Panc1 (cell line): ENCODE measurements at regions of chr5 and their contacts with region 1.

Region 1: DNA sequence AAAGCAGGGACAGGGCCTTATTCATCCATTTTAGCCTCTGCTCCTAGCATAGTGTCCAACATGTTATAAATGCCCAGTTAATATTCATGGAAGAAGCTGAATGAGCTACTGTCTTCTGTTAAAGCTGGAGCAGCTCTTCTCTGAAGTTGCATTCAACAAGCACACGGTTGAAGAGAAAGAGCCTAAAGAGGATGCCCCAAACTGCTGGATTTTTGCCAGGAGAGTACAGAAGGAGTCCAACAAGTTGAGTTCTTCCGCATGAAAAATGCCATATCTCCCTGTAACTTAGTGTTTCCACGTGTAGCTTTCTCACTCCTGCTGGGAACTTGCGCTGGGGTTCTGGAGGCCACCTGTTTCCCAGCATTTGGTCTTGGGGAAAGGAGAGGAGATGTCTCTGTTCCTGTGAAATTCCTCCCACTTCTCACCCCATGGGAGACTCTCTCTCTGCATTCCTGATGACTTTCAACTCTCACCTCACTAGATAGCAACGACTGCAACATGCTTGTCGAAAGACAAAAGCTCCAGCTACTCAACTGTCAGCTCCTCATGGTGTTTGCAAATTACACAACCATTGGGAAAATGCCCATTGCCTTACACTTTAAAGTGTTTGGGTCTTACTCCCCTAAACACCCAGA is 122.8 kb downstream of the KIF4B start:
- DNase-seq: no peak
- ATAC-seq: no peak
- H3K4me3 ChIP-seq: no peak overlapping the region
- H3K27ac ChIP-seq: no peak overlapping the region
- H3K4me1 ChIP-seq: no peaks in the 10 kb centered on the region
- H3K27me3 ChIP-seq: peaks cover 5% of the 10 kb centered on the region
- CTCF ChIP-seq: no peak

Region 2: DNA sequence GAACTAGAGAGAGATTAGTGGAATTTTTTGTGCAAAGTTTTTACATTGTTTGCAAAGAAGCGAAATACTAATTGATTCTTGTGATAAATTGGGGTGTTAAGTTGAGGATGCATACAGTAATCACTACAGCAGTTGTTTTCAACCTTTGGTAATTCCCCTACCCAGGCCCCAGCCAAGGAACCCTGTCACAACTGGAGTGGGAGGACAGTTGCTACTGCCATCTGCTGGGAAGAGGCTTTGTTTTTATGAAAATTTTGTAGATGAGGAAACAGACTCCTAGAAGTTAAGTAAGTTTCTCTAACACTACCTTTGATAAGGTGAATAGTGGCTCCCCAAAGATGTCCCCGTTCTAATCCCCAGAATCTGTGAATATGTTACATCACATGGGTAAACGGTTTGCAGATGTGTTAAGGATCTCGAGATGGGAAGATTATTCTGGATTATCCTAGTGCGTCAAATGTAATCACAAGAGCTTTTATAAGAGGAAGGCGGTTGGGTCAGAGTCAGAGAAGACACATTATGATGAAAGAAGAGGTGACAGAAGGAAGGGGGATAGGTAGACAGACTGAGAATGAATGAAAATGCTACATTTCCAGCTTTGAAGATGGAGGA is 1679.8 kb after region 1 on chr5:
- CTCF ChIA-PET with region 1: no interaction called
- POLR2A ChIA-PET with region 1: no interaction called
- in situ Hi-C with region 1: no loop called
- intact Hi-C with region 1: loop called (anchors 5 kb)
- DNase-seq: no peak
- ATAC-seq: no peak
- H3K4me3 ChIP-seq: no peak overlapping the region
- H3K27ac ChIP-seq: no peak overlapping the region
- H3K4me1 ChIP-seq: no peaks in the 10 kb centered on the region
- H3K27me3 ChIP-seq: no peaks in the 10 kb centered on the region
- CTCF ChIP-seq: peak; percentile 66

Region 3: GRCh38 chr5:157130925-157131324 is 1994.6 kb after region 1 on chr5:
- CTCF ChIA-PET with region 1: no interaction called
- POLR2A ChIA-PET with region 1: no interaction called
- in situ Hi-C with region 1: no loop called
- intact Hi-C with region 1: loop called (anchors 5 kb)
- DNase-seq: no peak
- ATAC-seq: no peak
- H3K4me3 ChIP-seq: no peak overlapping the region
- H3K27ac ChIP-seq: no peak overlapping the region
- H3K4me1 ChIP-seq: no peaks in the 10 kb centered on the region
- H3K27me3 ChIP-seq: no peaks in the 10 kb centered on the region
- CTCF ChIP-seq: no peak